ENCODE measurements at regions of chr18 and their contacts with region 1.

Region 1: GRCh38 chr18:67217551-67218166 is 298.9 kb downstream of the DSEL start:
- DNase-seq: peak in 1 of 2 donors; percentile 75
- H3K4me3 ChIP-seq: no peak overlapping the region
- H3K27ac ChIP-seq: no peak overlapping the region
- H3K4me1 ChIP-seq: no peaks in the 10 kb centered on the region
- H3K27me3 ChIP-seq: no peaks in the 10 kb centered on the region
- CTCF ChIP-seq: peak; percentile 61 to 79 (median 79)

Region 2: DNA sequence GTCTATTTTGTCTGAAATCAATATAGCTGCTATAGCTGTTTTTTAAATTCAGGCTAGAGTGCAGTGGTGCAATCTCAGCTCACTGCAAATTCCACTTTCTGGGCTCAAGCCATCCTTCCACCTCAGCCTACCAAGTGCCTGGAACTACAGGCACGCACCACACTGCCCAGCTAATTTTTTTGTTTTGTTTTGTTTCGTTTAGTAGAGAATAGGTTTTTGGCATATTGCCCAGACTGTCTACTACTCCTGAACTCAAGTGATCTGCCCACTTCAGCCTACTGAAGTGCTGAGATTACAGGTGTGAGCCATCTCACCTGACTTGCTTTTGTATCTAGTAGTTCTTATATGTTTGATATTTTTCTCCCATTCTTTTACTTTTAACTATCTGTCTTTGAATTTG is 873.4 kb before region 1 on chr18:
- intact Hi-C with region 1: no loop called
- DNase-seq: no peak
- H3K4me3 ChIP-seq: no peak overlapping the region
- H3K27ac ChIP-seq: no peak overlapping the region
- H3K4me1 ChIP-seq: no peaks in the 10 kb centered on the region
- H3K27me3 ChIP-seq: no peaks in the 10 kb centered on the region
- CTCF ChIP-seq: no peak

Region 3: DNA sequence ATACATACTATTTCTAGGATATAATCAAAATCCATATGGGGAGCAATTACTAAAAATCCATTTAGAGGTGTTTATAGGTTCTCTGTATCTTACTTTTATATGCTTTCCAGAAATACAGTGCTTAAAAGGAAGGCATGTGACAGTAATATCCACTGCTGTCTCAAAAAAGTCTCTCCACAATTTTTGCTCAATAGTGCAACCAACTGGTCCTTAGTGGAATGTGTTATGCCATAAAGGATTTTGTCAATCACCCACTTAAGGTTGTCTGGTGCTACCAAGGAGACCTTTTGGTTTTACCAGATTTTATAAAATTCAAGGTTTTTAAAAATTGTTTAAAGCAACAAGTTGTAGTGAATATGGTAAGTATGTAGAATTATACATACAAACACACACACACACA is 627.4 kb after region 1 on chr18:
- intact Hi-C with region 1: loop called (anchors 10 kb)
- DNase-seq: no peak
- H3K4me3 ChIP-seq: no peak overlapping the region
- H3K27ac ChIP-seq: no peak overlapping the region
- H3K4me1 ChIP-seq: no peaks in the 10 kb centered on the region
- H3K27me3 ChIP-seq: no peaks in the 10 kb centered on the region
- CTCF ChIP-seq: no peak

Region 4: GRCh38 chr18:68623342-68623741 is 1405.7 kb after region 1 on chr18:
- intact Hi-C with region 1: loop called (anchors 5 kb)
- DNase-seq: no peak
- H3K4me3 ChIP-seq: no peak overlapping the region
- H3K27ac ChIP-seq: no peak overlapping the region
- H3K4me1 ChIP-seq: no peaks in the 10 kb centered on the region
- H3K27me3 ChIP-seq: no peaks in the 10 kb centered on the region
- CTCF ChIP-seq: peak; percentile 11 to 88 (median 63)

Region 5: GRCh38 chr18:68660354-68661183 is 1442.9 kb after region 1 on chr18:
- intact Hi-C with region 1: loop called (anchors 1 kb)
- DNase-seq: no peak
- H3K4me3 ChIP-seq: no peak overlapping the region
- H3K27ac ChIP-seq: no peak overlapping the region
- H3K4me1 ChIP-seq: no peaks in the 10 kb centered on the region
- H3K27me3 ChIP-seq: no peaks in the 10 kb centered on the region
- CTCF ChIP-seq: peak in 2 of 3 experiments; percentile 32 to 62